A673 (cell line): ENCODE measurements at regions of chr15 and their contacts with region 1.

Region 1: DNA sequence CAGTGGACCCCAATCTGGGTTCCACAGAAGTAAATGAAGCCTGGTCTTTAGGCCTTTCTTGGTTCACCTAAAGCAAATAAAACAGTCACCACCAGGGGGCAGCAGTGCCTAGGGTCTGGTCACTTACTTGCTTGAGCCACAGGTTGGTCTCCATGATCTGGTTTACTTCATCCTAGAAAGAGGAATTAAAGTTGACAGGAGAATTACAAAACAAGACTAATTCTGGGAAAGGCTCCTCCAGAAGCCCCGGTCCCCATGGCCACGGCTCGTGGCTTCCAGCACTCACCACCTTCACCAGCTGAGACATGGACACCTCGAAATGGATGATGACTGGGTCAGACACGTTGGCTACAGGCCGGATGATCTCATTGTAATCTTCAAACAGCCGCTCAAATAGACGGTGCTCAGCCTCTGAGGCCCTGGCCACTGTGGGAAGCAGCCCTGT is 2.3 kb downstream of the CHRNA3 start:
- DNase-seq: peak; percentile 82
- H3K4me3 ChIP-seq: no peak overlapping the region
- H3K27ac ChIP-seq: no peak overlapping the region
- H3K4me1 ChIP-seq: no peaks in the 10 kb centered on the region
- H3K27me3 ChIP-seq: peaks cover 53% of the 10 kb centered on the region
- CTCF ChIP-seq: peak; percentile 85

Region 2: DNA sequence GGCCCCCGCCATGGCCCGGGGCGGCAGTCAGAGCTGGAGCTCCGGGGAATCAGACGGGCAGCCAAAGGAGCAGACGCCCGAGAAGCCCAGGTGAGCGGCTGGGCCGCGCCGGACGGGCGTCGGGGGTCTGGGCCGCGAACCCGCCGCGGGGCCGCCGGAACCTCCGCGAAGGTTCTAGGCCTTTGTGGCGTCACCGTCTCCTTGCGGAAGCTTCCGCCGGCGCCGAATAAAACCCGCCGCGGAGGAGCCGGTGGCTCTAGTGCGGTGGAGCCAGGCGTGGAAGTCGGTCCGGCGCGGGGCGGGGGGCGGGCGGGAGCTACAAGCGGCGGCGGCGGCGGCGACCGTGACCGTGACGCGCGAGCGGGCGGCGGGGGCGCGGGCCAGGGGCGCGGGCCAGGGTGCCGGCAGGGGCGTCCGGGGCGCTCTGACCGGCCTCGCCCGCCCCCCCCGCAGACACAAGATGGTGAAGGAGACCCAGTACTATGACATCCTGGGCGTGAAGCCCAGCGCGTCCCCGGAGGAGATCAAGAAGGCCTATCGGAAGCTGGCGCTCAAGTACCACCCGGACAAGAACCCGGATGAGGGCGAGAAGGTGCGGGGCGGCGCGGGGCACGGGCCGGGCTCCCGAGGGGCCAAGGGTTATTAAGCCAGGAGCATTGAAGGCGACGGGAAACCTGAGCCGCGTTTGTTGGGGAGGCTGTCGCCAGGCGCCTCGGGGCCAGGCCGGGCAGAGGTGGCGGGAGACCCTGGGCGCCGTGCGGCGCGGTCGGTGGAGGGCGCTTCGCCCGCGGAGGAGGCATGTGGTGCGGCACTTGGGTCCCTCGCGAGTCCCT is 354.0 kb before region 1 on chr15 and contains the start of gene DNAJA4:
- CTCF ChIA-PET with region 1: no interaction called
- POLR2A ChIA-PET with region 1: no interaction called
- intact Hi-C with region 1: no loop called
- DNase-seq: peak; percentile 63
- H3K4me3 ChIP-seq: peak within 1 kb of the TSS; percentile 48
- H3K27ac ChIP-seq: no peak within 1 kb of the TSS
- H3K4me1 ChIP-seq: no peaks in the 10 kb centered on the region
- H3K27me3 ChIP-seq: no peaks in the 10 kb centered on the region
- CTCF ChIP-seq: peak; percentile 48
- total RNA-seq, gene DNAJA4: 12.0 and 15.7 TPM in 2 replicates

Region 3: GRCh38 chr15:78709263-78709882 is 90.9 kb after region 1 on chr15:
- CTCF ChIA-PET with region 1: no interaction called
- POLR2A ChIA-PET with region 1: no interaction called
- intact Hi-C with region 1: loop called (anchors 1 kb)
- DNase-seq: peak; percentile 63
- H3K4me3 ChIP-seq: no peak overlapping the region
- H3K27ac ChIP-seq: no peak overlapping the region
- H3K4me1 ChIP-seq: no peaks in the 10 kb centered on the region
- H3K27me3 ChIP-seq: peaks cover 61% of the 10 kb centered on the region
- CTCF ChIP-seq: peak; percentile 89

Region 4: GRCh38 chr15:78726870-78727551 is 108.5 kb after region 1 on chr15:
- CTCF ChIA-PET with region 1: no interaction called
- POLR2A ChIA-PET with region 1: no interaction called
- intact Hi-C with region 1: no loop called
- DNase-seq: peak; percentile 60
- H3K4me3 ChIP-seq: no peak overlapping the region
- H3K27ac ChIP-seq: no peak overlapping the region
- H3K4me1 ChIP-seq: no peaks in the 10 kb centered on the region
- H3K27me3 ChIP-seq: peaks cover 13% of the 10 kb centered on the region
- CTCF ChIP-seq: no peak

Region 5: DNA sequence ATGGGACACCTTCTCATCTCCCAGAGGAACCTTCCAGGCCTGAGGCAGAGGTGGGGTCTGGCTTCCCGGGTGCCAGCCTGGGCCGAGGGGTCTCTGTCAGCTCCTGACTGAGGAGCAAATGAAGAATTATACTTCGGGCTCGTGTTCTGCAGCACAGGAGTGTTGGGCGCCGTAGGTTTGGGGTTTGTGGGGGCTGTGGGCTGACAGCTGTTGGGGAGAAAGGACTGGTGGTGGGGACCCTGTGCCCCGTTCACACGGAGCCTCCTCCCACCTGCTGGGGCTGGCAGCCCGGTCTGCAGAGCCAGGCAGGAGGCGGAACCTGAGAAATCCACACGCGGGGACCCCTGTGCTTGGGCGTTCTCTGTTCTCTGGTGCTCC is 133.1 kb after region 1 on chr15:
- CTCF ChIA-PET with region 1: no interaction called
- POLR2A ChIA-PET with region 1: no interaction called
- intact Hi-C with region 1: loop called (anchors 1 kb)
- DNase-seq: no peak
- H3K4me3 ChIP-seq: no peak overlapping the region
- H3K27ac ChIP-seq: no peak overlapping the region
- H3K4me1 ChIP-seq: no peaks in the 10 kb centered on the region
- H3K27me3 ChIP-seq: no peaks in the 10 kb centered on the region
- CTCF ChIP-seq: no peak